Activated naive CD4-positive, alpha-beta T cell treated with anti-CD3 and anti-CD28 coated beads for 36 hours (primary cell): ENCODE measurements at regions of chr11 and their contacts with region 1.

Region 1: GRCh38 chr11:106087815-106088435 is 10.5 kb downstream of the AASDHPPT start:
- DNase-seq: peak; percentile 69
- H3K4me3 Mint-ChIP-seq: no peak overlapping the region
- H3K27ac Mint-ChIP-seq: no peak overlapping the region
- H3K4me1 Mint-ChIP-seq: peaks cover 58% of the 10 kb centered on the region
- H3K27me3 Mint-ChIP-seq: no peaks in the 10 kb centered on the region

Region 2: DNA sequence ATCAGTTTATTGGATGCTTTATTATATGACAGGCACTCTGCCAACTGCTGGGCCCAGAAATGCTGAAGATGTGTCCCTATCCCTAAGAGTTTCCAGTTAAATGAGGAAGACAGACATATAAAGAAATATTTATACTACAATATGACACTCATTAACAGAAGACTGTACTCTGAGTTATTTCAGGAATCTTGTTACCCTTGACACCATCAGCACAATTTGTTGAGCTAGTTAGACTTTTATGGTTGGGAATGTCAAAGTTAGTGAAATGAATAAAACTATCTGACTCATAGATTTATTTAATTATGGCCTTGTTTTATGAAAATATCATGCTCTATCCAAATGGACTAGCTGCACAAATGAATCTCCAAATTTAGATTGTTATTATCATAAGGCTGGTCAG is 40.3 kb before region 1 on chr11:
- CTCF ChIA-PET with region 1: no interaction called
- intact Hi-C with region 1: no loop called
- DNase-seq: no peak
- H3K4me3 Mint-ChIP-seq: no peak overlapping the region
- H3K27ac Mint-ChIP-seq: no peak overlapping the region
- H3K4me1 Mint-ChIP-seq: no peaks in the 10 kb centered on the region
- H3K27me3 Mint-ChIP-seq: peaks cover 4% of the 10 kb centered on the region

Region 3: GRCh38 chr11:106063009-106063408 is 24.9 kb before region 1 on chr11:
- CTCF ChIA-PET with region 1: interaction called, 5 read pairs
- intact Hi-C with region 1: loop called (anchors 2 kb)
- DNase-seq: no peak
- H3K4me3 Mint-ChIP-seq: no peak overlapping the region
- H3K27ac Mint-ChIP-seq: no peak overlapping the region
- H3K4me1 Mint-ChIP-seq: peaks cover 12% of the 10 kb centered on the region
- H3K27me3 Mint-ChIP-seq: no peaks in the 10 kb centered on the region

Region 4: DNA sequence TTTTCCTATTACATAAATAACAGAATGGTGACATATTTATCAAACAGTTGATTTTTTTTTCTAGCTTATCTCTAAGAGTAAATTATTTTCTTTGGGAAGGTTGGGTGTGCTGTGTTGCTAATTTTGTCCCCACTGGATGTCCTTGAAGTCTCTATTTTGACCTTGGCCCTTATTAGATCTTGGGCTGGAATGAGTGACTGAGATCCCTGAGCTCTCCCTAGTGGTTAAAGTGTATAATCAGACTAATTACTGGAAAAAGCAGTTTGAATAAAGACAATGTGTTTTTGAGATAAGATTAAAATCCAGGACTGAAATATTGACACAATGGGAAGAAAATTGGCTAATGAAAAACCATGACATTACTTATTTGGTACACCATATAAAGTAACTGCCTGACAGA is 45.6 kb after region 1 on chr11:
- CTCF ChIA-PET with region 1: interaction called, 8 read pairs
- intact Hi-C with region 1: loop called (anchors 1 kb)
- DNase-seq: no peak
- H3K4me3 Mint-ChIP-seq: no peak overlapping the region
- H3K27ac Mint-ChIP-seq: no peak overlapping the region
- H3K4me1 Mint-ChIP-seq: no peaks in the 10 kb centered on the region
- H3K27me3 Mint-ChIP-seq: peaks cover 34% of the 10 kb centered on the region

Region 5: DNA sequence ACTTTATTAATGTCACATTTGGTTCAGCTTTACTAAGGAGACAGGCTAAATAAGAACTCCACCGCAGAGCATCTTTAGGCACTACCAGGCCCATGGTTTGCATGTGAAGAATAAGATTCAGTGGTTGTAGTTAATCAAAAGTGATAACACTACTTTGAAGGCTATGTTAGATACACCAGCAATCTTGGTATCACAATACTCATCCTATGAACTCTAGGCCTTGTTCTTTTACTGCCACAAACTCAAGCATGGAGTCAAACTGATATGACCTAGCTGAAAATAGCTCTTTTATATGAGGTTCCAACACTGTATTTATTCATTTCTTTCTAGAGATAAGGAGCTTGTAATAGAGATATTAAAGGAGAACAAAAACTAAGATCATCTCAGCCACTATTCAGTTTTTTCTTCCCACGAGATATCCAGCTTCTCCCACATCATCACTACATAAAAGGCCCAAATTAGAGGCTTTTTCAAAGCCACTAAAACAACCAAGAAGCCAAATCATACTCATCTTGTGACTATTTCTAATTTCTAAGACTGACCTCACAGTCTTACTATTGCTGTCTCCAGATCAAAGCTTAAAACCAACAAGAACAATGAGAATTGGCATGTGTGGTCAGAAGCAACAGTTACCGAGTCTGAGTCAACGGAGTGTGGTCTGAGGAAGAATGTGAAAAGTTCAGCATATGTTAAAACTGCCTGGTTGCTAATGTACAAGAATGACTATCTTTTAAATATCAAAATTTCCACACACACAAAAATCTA is 955.5 kb after region 1 on chr11:
- CTCF ChIA-PET with region 1: no interaction called
- intact Hi-C with region 1: loop called (anchors 5 kb)
- DNase-seq: no peak
- H3K4me3 Mint-ChIP-seq: no peak overlapping the region
- H3K27ac Mint-ChIP-seq: no peak overlapping the region
- H3K4me1 Mint-ChIP-seq: no peaks in the 10 kb centered on the region
- H3K27me3 Mint-ChIP-seq: no peaks in the 10 kb centered on the region

Region 6: GRCh38 chr11:107840129-107840484 is 1752.2 kb after region 1 on chr11:
- CTCF ChIA-PET with region 1: no interaction called
- intact Hi-C with region 1: loop called (anchors 5 kb)
- DNase-seq: no peak
- H3K4me3 Mint-ChIP-seq: no peak overlapping the region
- H3K27ac Mint-ChIP-seq: peak overlapping the region; percentile 93
- H3K4me1 Mint-ChIP-seq: peaks cover 68% of the 10 kb centered on the region
- H3K27me3 Mint-ChIP-seq: no peaks in the 10 kb centered on the region